Colonic mucosa (tissue), 4 donors: ENCODE measurements at regions of chr1 and their contacts with region 1.

Region 1: DNA sequence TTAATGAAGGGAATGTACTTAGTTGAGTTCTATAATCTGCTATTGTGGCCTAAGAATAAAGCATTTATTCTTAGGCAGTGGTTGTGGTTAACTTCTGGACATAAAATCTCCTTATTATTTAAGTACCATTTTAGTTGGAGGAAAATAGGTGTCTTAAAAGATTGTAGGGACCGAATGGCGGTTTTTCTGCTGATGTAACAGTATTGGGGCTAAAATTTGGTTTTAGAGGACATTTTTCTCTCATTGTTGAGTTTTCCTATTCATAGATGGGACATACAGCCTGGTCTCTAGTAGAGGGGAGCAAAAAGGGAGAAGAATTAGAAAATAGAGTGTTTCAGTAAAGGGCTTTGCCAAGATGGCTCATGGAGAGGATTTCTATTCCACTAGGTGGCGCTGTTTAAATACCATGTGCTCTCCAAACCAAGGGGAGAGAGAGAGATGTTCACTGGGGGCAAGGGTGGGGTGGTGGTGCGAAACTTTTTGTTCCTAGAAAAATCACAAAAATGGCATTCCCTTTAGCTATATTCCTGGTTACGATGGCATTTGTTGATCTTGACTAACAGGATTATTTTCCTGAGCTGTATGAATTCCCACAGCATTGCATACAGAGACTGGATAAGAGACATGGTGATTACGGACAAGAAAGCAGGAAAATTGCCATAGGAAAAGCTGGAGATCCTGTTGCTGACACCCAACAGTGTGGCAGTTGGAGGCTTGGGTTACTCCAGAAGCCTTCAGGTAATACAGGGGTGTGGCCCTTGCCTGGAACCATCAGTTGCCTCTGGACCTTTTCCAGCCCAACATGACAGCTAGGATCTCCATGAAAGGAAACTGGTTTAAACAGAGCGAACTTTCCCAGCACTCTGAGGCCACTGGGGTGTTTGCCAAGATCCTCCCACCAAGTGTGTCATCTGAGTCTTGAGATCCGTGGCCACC is 18.2 kb upstream of the FCGR2A start:
- DNase-seq: peak; percentile 36
- H3K4me3 ChIP-seq: no peak overlapping the region
- H3K27ac ChIP-seq: no peak overlapping the region
- H3K4me1 ChIP-seq: no peaks in the 10 kb centered on the region
- H3K27me3 ChIP-seq: no peaks in the 10 kb centered on the region
- CTCF ChIP-seq: peak; percentile 84

Region 2: DNA sequence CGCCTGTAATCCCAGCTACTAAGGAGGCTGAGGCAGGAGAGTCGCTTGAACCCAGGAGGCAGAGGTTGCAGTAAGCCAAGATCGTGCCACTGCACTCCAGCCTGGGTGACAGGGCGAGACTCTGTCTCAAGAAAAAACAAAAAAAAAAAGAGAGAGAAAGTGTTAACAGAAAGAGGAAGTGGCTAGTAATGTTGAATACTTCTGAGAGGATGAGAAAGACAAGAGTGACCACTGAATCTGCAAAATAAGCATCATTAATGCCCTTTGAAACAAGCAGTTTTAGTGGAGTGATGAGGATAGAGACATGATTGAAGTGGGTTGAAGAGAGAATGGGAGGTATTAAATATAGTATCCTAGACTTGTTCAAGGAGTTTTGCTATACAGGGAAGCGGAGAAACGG is 189.0 kb before region 1 on chr1:
- intact Hi-C with region 1: no loop called
- DNase-seq: no peak
- H3K4me3 ChIP-seq: no peak overlapping the region
- H3K27ac ChIP-seq: no peak overlapping the region
- H3K4me1 ChIP-seq: no peaks in the 10 kb centered on the region
- H3K27me3 ChIP-seq: no peaks in the 10 kb centered on the region
- CTCF ChIP-seq: no peak

Region 3: DNA sequence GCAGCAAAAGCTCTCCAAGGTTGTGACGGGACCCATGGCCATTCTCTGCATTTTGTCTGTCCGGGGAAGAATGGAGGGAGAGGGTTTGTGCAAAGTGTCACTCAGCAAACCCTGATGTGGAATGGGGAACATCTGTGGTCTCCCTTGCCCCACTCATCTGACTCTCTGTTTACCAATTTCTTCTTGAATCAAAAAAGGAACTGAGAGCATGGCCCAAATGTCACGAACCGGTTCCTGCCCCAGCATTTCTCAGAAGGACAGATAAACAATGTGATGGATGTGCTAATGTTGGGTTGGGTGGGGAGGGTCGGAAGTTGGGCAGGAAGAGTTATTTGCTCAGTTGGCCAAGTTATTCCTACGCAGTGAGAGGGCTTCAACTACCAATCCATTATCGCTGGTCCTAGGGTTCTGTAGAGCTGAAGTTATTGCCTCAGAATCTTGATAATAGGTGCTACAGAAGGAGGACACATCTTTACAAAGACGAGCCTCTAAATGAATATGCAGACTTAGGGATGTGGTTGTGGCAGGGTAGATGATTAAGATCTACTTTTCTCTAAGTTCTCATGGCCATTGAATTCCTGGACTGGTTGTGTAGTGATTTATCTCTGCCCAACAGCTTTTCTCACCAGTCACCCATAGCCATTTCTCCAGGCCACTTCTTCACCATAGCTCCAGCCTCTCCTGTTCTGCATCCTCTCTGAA is 252.9 kb after region 1 on chr1:
- intact Hi-C with region 1: loop called (anchors 5 kb)
- DNase-seq: no peak
- H3K4me3 ChIP-seq: no peak overlapping the region
- H3K27ac ChIP-seq: peak overlapping the region; percentile 24
- H3K4me1 ChIP-seq: no peaks in the 10 kb centered on the region
- H3K27me3 ChIP-seq: no peaks in the 10 kb centered on the region
- CTCF ChIP-seq: no peak